ENCODE measurements at regions of chr9 and their contacts with region 1.

Region 1: DNA sequence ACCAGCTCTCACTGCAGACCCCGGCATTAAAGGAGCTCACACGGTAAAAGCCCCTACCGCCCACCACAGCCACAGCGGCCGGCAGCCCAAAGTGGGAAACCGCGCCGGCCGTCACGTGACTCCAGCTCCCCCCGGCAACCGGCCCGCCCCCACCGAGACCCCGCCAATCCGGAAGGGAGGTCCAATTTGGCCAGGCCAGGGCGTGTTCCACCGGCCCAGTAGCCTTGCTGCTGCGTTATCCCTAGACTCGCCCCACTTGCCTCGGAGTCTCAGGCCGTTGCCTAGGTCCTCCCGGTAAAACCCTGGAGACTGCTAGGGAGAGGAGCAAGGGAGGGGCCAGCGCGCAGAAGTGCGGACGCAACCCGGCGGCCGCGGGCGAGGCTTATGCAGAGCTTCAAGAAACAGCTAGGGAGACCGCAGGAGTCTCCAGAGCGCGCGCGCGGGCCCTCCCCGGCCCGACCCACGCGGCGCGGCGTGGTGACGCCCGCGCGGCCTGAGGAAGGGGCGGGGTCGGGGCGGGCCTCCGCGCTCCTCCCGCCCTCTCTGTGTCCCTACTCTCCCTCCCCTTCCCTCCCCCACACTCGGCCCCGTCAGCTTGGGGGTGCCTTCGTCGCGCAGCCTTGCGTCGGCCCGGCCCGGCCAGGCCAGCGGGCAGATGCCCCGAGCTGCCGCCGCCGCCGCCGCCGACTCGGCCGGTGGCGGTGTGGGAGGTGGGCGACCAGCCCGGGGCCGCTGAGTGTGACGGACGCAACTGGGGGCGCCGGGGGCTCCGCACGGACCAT is at the start of gene RIC1:
- DNase-seq: peak; percentile 90
- H3K4me3 Mint-ChIP-seq: peak within 1 kb of the TSS; percentile 99
- H3K27ac Mint-ChIP-seq: peak within 1 kb of the TSS; percentile 100
- H3K4me1 Mint-ChIP-seq: peaks cover 59% of the 10 kb centered on the region
- H3K27me3 Mint-ChIP-seq: no peaks in the 10 kb centered on the region
- total RNA-seq, gene RIC1: 14.5 to 16.4 TPM

Region 2: GRCh38 chr9:4297151-4297785 is 1331.5 kb before region 1 on chr9:
- CTCF ChIA-PET with region 1: no interaction called
- intact Hi-C with region 1: loop called (anchors 10 kb)
- DNase-seq: peak; percentile 80
- H3K4me3 Mint-ChIP-seq: peak overlapping the region; percentile 86
- H3K27ac Mint-ChIP-seq: peak overlapping the region; percentile 86
- H3K4me1 Mint-ChIP-seq: peaks cover 42% of the 10 kb centered on the region
- H3K27me3 Mint-ChIP-seq: peaks cover 7% of the 10 kb centered on the region

Region 3: DNA sequence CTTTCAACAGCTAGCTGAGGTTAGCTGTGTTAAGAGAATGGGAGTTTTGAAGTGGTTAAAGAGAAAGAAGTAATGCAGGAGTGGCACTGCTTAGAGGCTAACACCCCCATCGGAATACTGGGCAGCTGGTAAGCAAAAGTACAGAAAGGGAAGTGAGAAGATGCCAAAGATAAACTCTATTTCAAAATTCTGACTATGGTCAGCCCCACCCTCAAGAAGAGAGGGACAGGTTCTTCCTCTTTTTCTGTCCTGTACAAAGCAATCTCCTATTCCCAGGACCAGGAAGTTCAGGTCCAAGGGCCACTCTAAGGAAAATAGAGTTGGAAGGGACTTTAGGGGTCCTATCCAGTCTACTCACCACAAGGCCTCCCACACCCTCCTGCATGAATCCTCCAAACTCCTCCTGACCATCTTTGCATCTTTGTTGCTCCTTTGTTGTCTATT is 689.6 kb before region 1 on chr9:
- CTCF ChIA-PET with region 1: no interaction called
- intact Hi-C with region 1: loop called (anchors 2 kb)
- DNase-seq: no peak
- H3K4me3 Mint-ChIP-seq: no peak overlapping the region
- H3K27ac Mint-ChIP-seq: peak overlapping the region; percentile 88
- H3K4me1 Mint-ChIP-seq: peaks cover 79% of the 10 kb centered on the region
- H3K27me3 Mint-ChIP-seq: no peaks in the 10 kb centered on the region

Region 4: DNA sequence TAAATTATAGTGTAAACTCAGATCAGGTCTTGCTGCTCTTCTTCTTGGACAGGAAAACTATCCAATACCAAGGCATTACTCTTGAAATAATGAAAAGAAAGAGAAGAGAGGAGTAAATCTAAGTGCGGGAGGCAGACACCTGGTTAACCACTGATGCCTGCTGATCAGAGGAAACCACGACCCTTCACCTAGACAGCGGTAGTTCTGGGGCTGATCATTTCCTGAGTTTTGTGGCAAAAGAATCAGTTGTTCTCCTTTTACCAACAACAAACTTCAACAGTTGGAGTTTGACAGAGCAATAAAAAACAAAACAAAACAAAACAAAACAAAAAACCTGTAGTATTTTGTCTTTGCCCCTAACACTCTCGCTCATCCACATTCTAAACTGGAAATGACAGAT is 292.0 kb before region 1 on chr9:
- CTCF ChIA-PET with region 1: no interaction called
- intact Hi-C with region 1: no loop called
- DNase-seq: peak; percentile 42
- H3K4me3 Mint-ChIP-seq: peak overlapping the region; percentile 57
- H3K27ac Mint-ChIP-seq: no peak overlapping the region
- H3K4me1 Mint-ChIP-seq: peaks cover 39% of the 10 kb centered on the region
- H3K27me3 Mint-ChIP-seq: no peaks in the 10 kb centered on the region

Region 5: DNA sequence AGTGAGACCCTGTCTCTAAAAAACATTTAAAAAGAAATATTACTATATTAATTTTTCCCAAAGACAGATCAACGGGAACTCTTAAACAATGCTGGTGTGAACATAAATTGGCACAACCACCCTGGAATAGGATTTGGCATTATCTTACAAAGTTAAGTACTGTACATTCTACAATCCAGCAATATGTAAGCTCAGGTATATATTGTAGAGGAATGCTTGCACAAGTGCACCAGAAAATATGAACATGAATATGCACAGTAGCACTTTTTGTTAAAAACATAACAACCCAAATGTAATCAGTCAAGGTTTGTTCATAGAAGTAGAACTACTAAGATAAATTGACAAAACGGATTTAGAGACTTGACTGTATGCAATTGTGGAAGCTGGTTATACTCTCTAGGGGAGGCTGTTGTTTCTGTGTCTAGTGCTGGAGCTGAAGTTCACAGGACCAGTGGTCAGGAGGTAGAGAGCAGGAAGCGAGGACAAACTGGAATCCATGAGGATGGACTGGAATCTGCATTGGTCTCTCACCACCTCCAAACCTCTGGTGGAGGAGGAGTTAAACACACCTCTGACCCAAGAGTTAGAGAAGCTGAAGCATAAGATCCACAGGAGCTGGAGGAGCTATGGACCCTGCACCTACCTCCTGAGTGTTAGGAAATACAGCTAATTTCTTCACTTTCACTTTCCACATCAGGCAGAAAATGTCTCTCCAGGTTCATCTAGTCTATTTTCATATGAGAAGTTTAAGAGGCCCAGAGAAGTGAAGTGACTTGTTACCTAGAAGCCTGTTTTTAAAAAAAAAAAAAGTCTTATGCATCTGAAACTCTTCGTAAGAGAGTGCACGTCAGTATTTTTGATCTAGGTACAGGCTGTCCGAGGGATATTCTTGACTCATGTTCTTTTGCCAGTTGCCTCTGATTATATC is 20.2 kb before region 1 on chr9:
- CTCF ChIA-PET with region 1: interaction called, 7 read pairs
- intact Hi-C with region 1: loop called (anchors 1 kb)
- DNase-seq: no peak
- H3K4me3 Mint-ChIP-seq: peak overlapping the region; percentile 60
- H3K27ac Mint-ChIP-seq: no peak overlapping the region
- H3K4me1 Mint-ChIP-seq: peaks cover 22% of the 10 kb centered on the region
- H3K27me3 Mint-ChIP-seq: no peaks in the 10 kb centered on the region

Region 6: GRCh38 chr9:5764130-5764868 is 135.6 kb after region 1 on chr9:
- CTCF ChIA-PET with region 1: no interaction called
- intact Hi-C with region 1: loop called (anchors 1 kb)
- DNase-seq: peak; percentile 55
- H3K4me3 Mint-ChIP-seq: no peak overlapping the region
- H3K27ac Mint-ChIP-seq: peak overlapping the region; percentile 83
- H3K4me1 Mint-ChIP-seq: peaks cover 72% of the 10 kb centered on the region
- H3K27me3 Mint-ChIP-seq: no peaks in the 10 kb centered on the region

Region 7: DNA sequence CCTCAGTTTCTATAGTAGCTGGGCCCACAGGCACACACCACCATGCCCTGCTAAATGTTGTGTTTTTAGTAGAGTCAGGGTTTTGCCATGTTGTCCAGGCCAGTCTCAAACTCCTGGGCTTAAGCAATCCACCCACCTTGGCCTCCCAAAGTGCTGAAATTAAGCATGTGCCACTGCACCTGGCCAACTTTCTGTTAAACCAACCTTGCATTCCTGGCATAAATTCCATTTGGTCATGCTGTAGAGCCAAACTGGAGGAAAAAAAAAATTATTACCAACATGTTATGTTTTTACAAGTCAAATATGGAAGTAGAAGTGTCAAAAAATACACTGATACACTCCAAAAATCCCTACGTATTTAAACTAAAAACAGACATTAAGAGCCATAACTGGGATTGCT is 150.1 kb after region 1 on chr9:
- CTCF ChIA-PET with region 1: no interaction called
- intact Hi-C with region 1: no loop called
- DNase-seq: no peak
- H3K4me3 Mint-ChIP-seq: no peak overlapping the region
- H3K27ac Mint-ChIP-seq: no peak overlapping the region
- H3K4me1 Mint-ChIP-seq: peaks cover 3% of the 10 kb centered on the region
- H3K27me3 Mint-ChIP-seq: no peaks in the 10 kb centered on the region

Region 8: DNA sequence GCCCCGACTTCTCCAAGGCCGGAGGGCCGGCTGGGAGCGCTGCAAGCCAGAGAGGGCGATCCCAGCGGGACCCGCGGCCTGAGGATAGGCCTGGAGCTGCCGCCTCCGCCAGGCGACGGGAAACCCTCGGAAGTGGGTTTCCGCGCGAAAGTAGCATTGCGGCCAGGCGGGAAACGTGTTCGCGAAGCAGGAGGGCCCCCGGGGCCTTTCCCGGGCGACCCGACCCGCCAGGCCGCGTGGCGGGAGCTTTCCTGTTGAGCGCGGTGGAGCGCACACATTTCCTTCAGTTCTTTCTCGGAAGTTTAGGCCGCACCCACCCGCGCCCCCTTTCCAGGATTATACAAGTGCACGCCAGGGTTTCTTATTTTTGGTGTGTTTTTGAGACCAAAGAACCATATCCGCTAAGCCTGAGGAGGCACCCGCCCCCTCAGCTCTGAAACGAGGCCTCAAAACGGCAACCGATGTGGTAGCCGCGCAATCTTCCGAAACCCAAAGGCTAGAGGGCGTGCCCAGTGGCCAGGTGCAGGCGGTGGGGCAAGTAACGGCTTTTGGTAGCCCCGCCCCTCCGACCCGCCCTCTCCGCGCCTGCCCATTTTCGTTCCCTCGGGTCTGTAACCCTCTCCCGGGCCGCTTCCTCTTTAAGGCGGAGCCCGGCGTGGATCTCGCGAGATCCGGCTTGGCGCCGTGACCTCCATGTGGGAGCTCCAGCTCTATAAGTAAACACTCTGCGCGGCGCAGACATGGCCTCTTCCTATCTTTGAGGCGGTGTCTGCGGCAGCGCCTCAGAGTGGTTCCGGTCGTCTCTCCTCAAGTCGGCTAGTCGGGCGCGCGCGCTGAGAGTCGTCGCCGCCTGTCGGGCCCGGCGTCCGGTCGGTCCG is 784.0 kb after region 1 on chr9 and contains the start of gene UHRF2:
- CTCF ChIA-PET with region 1: no interaction called
- intact Hi-C with region 1: loop called (anchors 5 kb)
- DNase-seq: peak; percentile 100
- H3K4me3 Mint-ChIP-seq: peak within 1 kb of the TSS; percentile 82
- H3K27ac Mint-ChIP-seq: peak within 1 kb of the TSS; percentile 95
- H3K4me1 Mint-ChIP-seq: peaks cover 29% of the 10 kb centered on the region
- H3K27me3 Mint-ChIP-seq: no peaks in the 10 kb centered on the region
- total RNA-seq, gene UHRF2: 62.7 to 71.5 TPM

Measured in activated naive CD4-positive, alpha-beta T cell treated with anti-CD3 and anti-CD28 coated beads for 36 hours (primary cell).